Activated B cell treated with CpG ODN at 0.5 μM for 24 hours (primary cell): ENCODE measurements at regions of chr12 and their contacts with region 1.

Region 1: GRCh38 chr12:120437754-120438494 is at the start of gene COX6A1:
- DNase-seq: peak; percentile 87
- ATAC-seq: peak; percentile 96
- H3K4me3 Mint-ChIP-seq: peak within 1 kb of the TSS; percentile 97
- H3K27ac Mint-ChIP-seq: peak within 1 kb of the TSS; percentile 89
- H3K4me1 Mint-ChIP-seq: peaks cover 29% of the 10 kb centered on the region
- H3K27me3 Mint-ChIP-seq: peaks cover 4% of the 10 kb centered on the region
- CTCF ChIP-seq: no peak
- total RNA-seq, gene COX6A1: 255 and 292 TPM in 2 replicates

Region 2: GRCh38 chr12:120317224-120318105 is 120.5 kb before region 1 on chr12:
- CTCF ChIA-PET with region 1: no interaction called
- POLR2A ChIA-PET with region 1: no interaction called
- intact Hi-C with region 1: loop called (anchors 5 kb)
- DNase-seq: peak; percentile 100
- ATAC-seq: peak; percentile 99
- H3K4me3 Mint-ChIP-seq: peak overlapping the region; percentile 88
- H3K27ac Mint-ChIP-seq: peak overlapping the region; percentile 90
- H3K4me1 Mint-ChIP-seq: peaks cover 13% of the 10 kb centered on the region
- H3K27me3 Mint-ChIP-seq: peaks cover 1% of the 10 kb centered on the region
- CTCF ChIP-seq: no peak

Region 3: GRCh38 chr12:120453977-120454376 is 16.1 kb after region 1 on chr12:
- CTCF ChIA-PET with region 1: no interaction called
- POLR2A ChIA-PET with region 1: no interaction called
- intact Hi-C with region 1: no loop called
- DNase-seq: no peak
- ATAC-seq: peak; percentile 87
- H3K4me3 Mint-ChIP-seq: no peak overlapping the region
- H3K27ac Mint-ChIP-seq: no peak overlapping the region
- H3K4me1 Mint-ChIP-seq: peaks cover 10% of the 10 kb centered on the region
- H3K27me3 Mint-ChIP-seq: no peaks in the 10 kb centered on the region
- CTCF ChIP-seq: no peak

Region 4: GRCh38 chr12:120534203-120534702 is 96.3 kb after region 1 on chr12 and contains the start of gene RNF10:
- CTCF ChIA-PET with region 1: no interaction called
- POLR2A ChIA-PET with region 1: no interaction called
- intact Hi-C with region 1: loop called (anchors 1 kb)
- DNase-seq: peak; percentile 66
- ATAC-seq: peak; percentile 68
- H3K4me3 Mint-ChIP-seq: peak within 1 kb of the TSS; percentile 93
- H3K27ac Mint-ChIP-seq: peak within 1 kb of the TSS; percentile 91
- H3K4me1 Mint-ChIP-seq: peaks cover 60% of the 10 kb centered on the region
- H3K27me3 Mint-ChIP-seq: no peaks in the 10 kb centered on the region
- CTCF ChIP-seq: no peak
- total RNA-seq, gene RNF10: 180 and 200 TPM in 2 replicates

Region 5: DNA sequence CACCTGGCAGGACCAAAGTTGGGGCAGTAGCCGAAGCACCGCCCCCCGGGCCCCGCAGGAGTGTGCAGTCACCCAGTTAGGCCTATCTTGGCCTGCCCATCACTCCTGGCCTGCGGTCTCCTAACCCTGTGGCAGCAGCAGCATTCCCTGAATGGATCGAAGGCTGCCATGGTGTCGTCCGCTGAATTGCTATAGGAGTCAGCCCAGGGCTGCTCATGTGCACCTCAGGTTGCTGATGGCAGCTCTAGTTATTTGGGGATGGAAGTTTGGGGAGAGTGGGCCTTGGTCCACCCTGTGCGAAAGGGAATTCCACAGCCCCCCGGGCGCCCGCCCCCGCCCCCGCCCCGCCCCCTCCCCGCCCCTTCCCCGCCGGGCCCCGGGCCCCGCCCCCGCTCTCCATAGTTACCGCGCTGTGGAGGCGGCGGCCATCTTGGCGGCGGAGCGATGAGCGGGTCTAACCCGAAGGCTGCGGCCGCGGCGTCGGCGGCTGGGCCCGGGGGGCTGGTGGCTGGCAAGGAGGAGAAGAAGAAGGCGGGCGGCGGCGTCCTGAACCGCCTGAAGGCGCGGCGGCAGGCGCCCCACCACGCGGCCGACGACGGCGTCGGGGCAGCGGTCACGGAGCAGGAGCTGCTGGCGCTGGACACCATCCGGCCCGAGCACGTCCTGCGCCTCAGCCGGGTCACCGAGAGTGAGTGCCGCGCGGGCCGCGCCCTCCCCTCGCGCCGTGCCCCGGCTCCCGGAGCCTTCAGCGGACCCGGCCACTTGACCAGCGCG is 272.3 kb after region 1 on chr12 and contains the start of gene UNC119B:
- CTCF ChIA-PET with region 1: no interaction called
- POLR2A ChIA-PET with region 1: no interaction called
- intact Hi-C with region 1: loop called (anchors 10 kb)
- DNase-seq: peak; percentile 71
- ATAC-seq: peak; percentile 92
- H3K4me3 Mint-ChIP-seq: peak within 1 kb of the TSS; percentile 89
- H3K27ac Mint-ChIP-seq: peak within 1 kb of the TSS; percentile 82
- H3K4me1 Mint-ChIP-seq: peaks cover 29% of the 10 kb centered on the region
- H3K27me3 Mint-ChIP-seq: no peaks in the 10 kb centered on the region
- CTCF ChIP-seq: no peak
- total RNA-seq, gene UNC119B: 17.3 and 18.5 TPM in 2 replicates